Left ventricle myocardium superior (tissue), 1 donor: ENCODE measurements at regions of chr3 and their contacts with region 1.

Region 1: DNA sequence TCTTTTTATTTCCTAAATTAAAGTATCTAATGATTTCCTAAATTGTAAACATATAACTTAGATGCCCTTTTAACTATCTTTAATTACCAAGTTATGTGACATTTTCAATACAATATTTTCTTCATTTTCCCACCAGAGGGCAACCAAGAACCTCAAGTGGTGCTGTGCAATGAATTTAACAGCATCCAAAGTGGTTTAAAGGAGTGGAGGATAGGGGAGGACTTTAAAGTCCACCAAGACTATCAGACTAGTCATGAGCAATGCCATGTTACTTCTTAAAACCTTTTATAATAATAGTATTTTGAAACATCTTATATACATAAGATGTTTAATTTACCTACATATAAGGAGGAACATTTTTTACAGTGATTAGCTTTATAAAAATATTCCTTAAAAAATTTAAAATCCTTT is 74.4 kb downstream of the DLG1 start:
- DNase-seq: no peak
- ATAC-seq: peak; percentile 42

Region 2: GRCh38 chr3:196547067-196547466 is 677.0 kb before region 1 on chr3:
- intact Hi-C with region 1: no loop called
- DNase-seq: no peak
- ATAC-seq: no peak

Region 3: DNA sequence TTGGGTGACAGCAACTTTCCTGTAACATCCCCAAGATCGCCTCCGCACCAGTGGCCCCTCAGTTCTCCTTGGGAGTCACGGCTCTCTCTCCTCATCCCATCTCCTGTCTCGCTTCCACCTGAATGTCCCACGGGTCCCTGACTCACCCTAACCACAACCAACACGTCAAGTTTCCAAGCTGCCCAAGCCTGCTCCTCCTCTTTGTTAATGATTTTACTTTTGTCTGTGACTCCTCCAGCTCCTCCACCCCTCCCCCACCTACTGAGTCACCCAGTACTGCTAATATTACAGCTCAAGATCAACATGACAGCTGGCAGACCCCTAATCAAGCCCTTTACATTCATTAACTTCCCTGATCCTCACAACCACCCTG is 292.5 kb after region 1 on chr3:
- intact Hi-C with region 1: loop called (anchors 10 kb)
- DNase-seq: no peak
- ATAC-seq: no peak